CD4-positive, alpha-beta T cell (primary cell): ENCODE measurements at regions of chr16 and their contacts with region 1.

Region 1: DNA sequence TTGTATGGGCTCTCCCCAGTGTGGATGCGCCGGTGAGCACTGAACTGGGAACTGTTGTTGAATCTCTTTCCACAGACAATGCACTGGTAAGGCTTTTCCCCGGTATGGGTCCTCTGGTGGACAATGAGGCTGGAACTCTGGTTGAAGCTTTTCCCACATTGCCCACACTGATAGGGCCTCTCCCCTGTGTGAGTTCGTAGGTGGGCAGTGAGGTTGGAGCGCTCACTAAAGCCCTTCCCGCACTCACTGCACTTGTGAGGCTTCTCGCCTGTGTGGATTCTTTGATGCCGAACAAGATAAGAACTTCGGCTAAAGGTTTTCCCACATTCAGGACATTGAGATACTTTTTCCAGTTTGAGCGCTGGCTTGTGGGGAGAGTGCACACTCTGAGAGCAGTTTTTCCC is 17.8 kb downstream of the ZSCAN32 start:
- DNase-seq: no peak
- ATAC-seq: no peak
- H3K4me3 ChIP-seq: no peak overlapping the region
- H3K4me3 Mint-ChIP-seq: no peak overlapping the region
- H3K27ac ChIP-seq: no peak overlapping the region
- H3K27ac Mint-ChIP-seq: no peak overlapping the region
- H3K4me1 ChIP-seq: no peaks in the 10 kb centered on the region
- H3K4me1 Mint-ChIP-seq: no peaks in the 10 kb centered on the region
- H3K27me3 ChIP-seq: no peaks in the 10 kb centered on the region
- H3K27me3 Mint-ChIP-seq: no peaks in the 10 kb centered on the region
- CTCF ChIP-seq: no peak

Region 2: GRCh38 chr16:3223913-3224515 is 159.0 kb before region 1 on chr16:
- CTCF ChIA-PET with region 1: no interaction called
- POLR2A ChIA-PET with region 1: no interaction called
- intact Hi-C with region 1: loop called in 1 of 2 experiments (anchors 5 kb)
- DNase-seq: no peak
- ATAC-seq: no peak
- H3K4me3 ChIP-seq: no peak overlapping the region
- H3K4me3 Mint-ChIP-seq: no peak overlapping the region
- H3K27ac ChIP-seq: no peak overlapping the region
- H3K27ac Mint-ChIP-seq: no peak overlapping the region
- H3K4me1 ChIP-seq: no peaks in the 10 kb centered on the region
- H3K4me1 Mint-ChIP-seq: no peaks in the 10 kb centered on the region
- H3K27me3 ChIP-seq: no peaks in the 10 kb centered on the region
- H3K27me3 Mint-ChIP-seq: no peaks in the 10 kb centered on the region
- CTCF ChIP-seq: no peak

Region 3: GRCh38 chr16:3292604-3293003 is 90.4 kb before region 1 on chr16:
- CTCF ChIA-PET with region 1: no interaction called
- POLR2A ChIA-PET with region 1: no interaction called
- intact Hi-C with region 1: loop called in 1 of 2 experiments (anchors 5 kb)
- DNase-seq: no peak
- ATAC-seq: no peak
- H3K4me3 ChIP-seq: no peak overlapping the region
- H3K4me3 Mint-ChIP-seq: no peak overlapping the region
- H3K27ac ChIP-seq: no peak overlapping the region
- H3K27ac Mint-ChIP-seq: no peak overlapping the region
- H3K4me1 ChIP-seq: no peaks in the 10 kb centered on the region
- H3K4me1 Mint-ChIP-seq: no peaks in the 10 kb centered on the region
- H3K27me3 ChIP-seq: no peaks in the 10 kb centered on the region
- H3K27me3 Mint-ChIP-seq: no peaks in the 10 kb centered on the region
- CTCF ChIP-seq: no peak

Region 4: GRCh38 chr16:3311496-3311895 is 71.6 kb before region 1 on chr16:
- CTCF ChIA-PET with region 1: no interaction called
- POLR2A ChIA-PET with region 1: no interaction called
- intact Hi-C with region 1: loop called in 1 of 2 experiments (anchors 5 kb)
- DNase-seq: no peak
- ATAC-seq: no peak
- H3K4me3 ChIP-seq: no peak overlapping the region
- H3K4me3 Mint-ChIP-seq: no peak overlapping the region
- H3K27ac ChIP-seq: no peak overlapping the region
- H3K27ac Mint-ChIP-seq: no peak overlapping the region
- H3K4me1 ChIP-seq: peaks cover 11% of the 10 kb centered on the region
- H3K4me1 Mint-ChIP-seq: peaks cover 9% of the 10 kb centered on the region
- H3K27me3 ChIP-seq: no peaks in the 10 kb centered on the region
- H3K27me3 Mint-ChIP-seq: no peaks in the 10 kb centered on the region
- CTCF ChIP-seq: no peak

Region 5: GRCh38 chr16:3596101-3596861 is 213.2 kb after region 1 on chr16:
- CTCF ChIA-PET with region 1: no interaction called
- POLR2A ChIA-PET with region 1: no interaction called
- intact Hi-C with region 1: no loop called
- DNase-seq: no peak
- ATAC-seq: no peak
- H3K4me3 ChIP-seq: no peak overlapping the region
- H3K4me3 Mint-ChIP-seq: no peak overlapping the region
- H3K27ac ChIP-seq: no peak overlapping the region
- H3K27ac Mint-ChIP-seq: no peak overlapping the region
- H3K4me1 ChIP-seq: no peaks in the 10 kb centered on the region
- H3K4me1 Mint-ChIP-seq: no peaks in the 10 kb centered on the region
- H3K27me3 ChIP-seq: no peaks in the 10 kb centered on the region
- H3K27me3 Mint-ChIP-seq: no peaks in the 10 kb centered on the region
- CTCF ChIP-seq: no peak